ENCODE measurements at regions of chr3 and their contacts with region 1.

Region 1: DNA sequence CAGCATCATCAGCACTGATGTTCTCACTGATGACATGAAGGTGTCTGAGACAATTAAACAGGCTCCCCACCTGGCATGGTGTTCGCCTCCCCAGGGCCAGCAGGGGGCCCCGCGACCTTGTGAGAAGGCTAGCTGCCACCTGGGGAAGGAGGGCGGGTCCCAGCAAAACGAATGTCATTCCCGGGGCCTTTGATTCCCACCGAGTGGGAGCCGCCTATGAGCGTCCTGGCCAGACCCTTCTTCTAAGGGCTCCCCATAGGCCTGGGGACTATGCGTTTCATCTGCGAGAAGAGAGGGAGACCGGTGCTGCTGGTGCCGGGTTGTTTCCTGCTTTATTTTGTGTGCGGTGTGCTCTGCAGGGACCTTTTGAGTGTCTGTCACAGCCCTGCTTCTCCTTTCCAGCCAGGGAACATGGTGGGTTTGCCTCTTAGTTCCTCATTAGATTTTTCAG is 20.5 kb upstream of the MINDY4B start:
- DNase-seq: peak; percentile 23 to 57
- ATAC-seq: peak; percentile 37 to 82 (median 47)
- H3K4me3 ChIP-seq: no peak overlapping the region
- H3K4me3 Mint-ChIP-seq: peak overlapping the region; percentile 25
- H3K27ac ChIP-seq: no peak overlapping the region
- H3K27ac Mint-ChIP-seq: no peak overlapping the region
- H3K4me1 ChIP-seq: peaks cover 8% of the 10 kb centered on the region
- H3K4me1 Mint-ChIP-seq: peaks cover 9% of the 10 kb centered on the region in 2 donors
- H3K27me3 ChIP-seq: peaks cover 2% of the 10 kb centered on the region
- H3K27me3 Mint-ChIP-seq: peaks cover 3 to 16% of the 10 kb centered on the region in 2 donors
- CTCF ChIP-seq: peak; percentile 52

Region 2: DNA sequence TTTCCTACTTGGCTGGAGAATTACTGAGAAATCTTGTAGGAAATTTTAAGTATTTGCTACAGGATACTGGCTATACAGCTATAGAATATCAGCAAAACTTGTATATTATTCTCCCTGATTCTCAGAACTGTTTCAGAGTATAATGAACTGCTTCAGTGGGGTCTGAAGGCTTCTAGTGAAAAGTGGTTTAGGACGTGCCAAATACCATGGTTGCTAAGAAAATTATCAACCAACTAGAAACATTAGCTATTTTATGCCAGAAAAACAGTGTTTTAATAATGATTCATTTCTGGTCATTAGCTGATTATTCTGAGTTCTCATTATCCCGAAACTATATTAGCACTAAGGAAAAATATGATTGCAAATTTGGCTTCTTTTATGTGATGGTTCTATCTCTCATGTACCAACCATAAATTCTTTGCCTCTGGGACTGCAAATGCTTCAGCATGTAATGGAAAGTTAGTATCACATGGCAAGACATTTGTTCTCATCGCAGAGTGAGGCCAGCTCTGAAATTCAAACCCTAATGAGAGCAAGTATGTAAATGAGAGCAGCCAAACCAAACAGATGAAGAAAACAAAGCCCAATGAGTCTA is 528.7 kb before region 1 on chr3:
- intact Hi-C with region 1: no loop called
- DNase-seq: no peak
- ATAC-seq: no peak
- H3K4me3 ChIP-seq: no peak overlapping the region
- H3K4me3 Mint-ChIP-seq: no peak overlapping the region
- H3K27ac ChIP-seq: no peak overlapping the region
- H3K27ac Mint-ChIP-seq: no peak overlapping the region
- H3K4me1 ChIP-seq: no peaks in the 10 kb centered on the region
- H3K4me1 Mint-ChIP-seq: no peaks in the 10 kb centered on the region
- H3K27me3 ChIP-seq: peaks cover 5% of the 10 kb centered on the region
- H3K27me3 Mint-ChIP-seq: peaks cover 0 to 5% of the 10 kb centered on the region in 2 donors
- CTCF ChIP-seq: no peak

Region 3: GRCh38 chr3:151146071-151146730 is 220.4 kb after region 1 on chr3:
- intact Hi-C with region 1: loop called (anchors 5 kb)
- DNase-seq: peak; percentile 26 to 78
- ATAC-seq: peak; percentile 78 to 88 (median 82)
- H3K4me3 ChIP-seq: no peak overlapping the region
- H3K4me3 Mint-ChIP-seq: no peak overlapping the region
- H3K27ac ChIP-seq: no peak overlapping the region
- H3K27ac Mint-ChIP-seq: peak overlapping the region in 1 of 2 donors; percentile 60
- H3K4me1 ChIP-seq: peaks cover 12% of the 10 kb centered on the region
- H3K4me1 Mint-ChIP-seq: no peaks in the 10 kb centered on the region
- H3K27me3 ChIP-seq: no peaks in the 10 kb centered on the region
- H3K27me3 Mint-ChIP-seq: peaks cover 0 to 5% of the 10 kb centered on the region in 2 donors
- CTCF ChIP-seq: peak; percentile 80

Measured in natural killer cell (primary cell).